T-cell (primary cell): ENCODE measurements at regions of chr18 and their contacts with region 1.

Region 1: DNA sequence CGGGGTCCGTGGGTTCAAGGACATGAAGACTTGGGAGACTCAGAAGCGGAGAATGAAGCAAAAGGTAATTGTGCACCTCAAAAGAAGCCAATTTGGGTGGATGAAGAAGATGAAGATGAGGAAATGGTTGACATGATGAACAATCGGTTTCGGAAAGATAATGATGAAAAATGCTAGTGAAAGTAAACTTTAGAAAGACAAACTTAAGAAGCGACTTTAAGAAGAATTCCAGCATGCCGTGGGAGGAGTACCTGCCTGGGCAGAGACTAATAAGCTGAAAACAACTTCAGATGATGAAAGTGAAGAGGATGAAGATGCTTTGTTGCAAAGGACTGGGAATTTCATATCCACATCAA is 43.5 kb downstream of the PSTPIP2 start:
- DNase-seq: no peak
- ATAC-seq: no peak
- H3K4me3 ChIP-seq: peak overlapping the region; percentile 60 to 70
- H3K4me3 Mint-ChIP-seq: peak overlapping the region; percentile 86 to 91 (median 90)
- H3K27ac ChIP-seq: no peak overlapping the region
- H3K27ac Mint-ChIP-seq: peak overlapping the region; percentile 12 to 84
- H3K4me1 ChIP-seq: peaks cover 2 to 10% of the 10 kb centered on the region in 2 experiments
- H3K4me1 Mint-ChIP-seq: peaks cover 12 to 13% (median 12%) of the 10 kb centered on the region in 3 donors
- H3K27me3 ChIP-seq: no peaks in the 10 kb centered on the region
- H3K27me3 Mint-ChIP-seq: peaks cover 0 to 5% of the 10 kb centered on the region in 2 donors

Region 2: DNA sequence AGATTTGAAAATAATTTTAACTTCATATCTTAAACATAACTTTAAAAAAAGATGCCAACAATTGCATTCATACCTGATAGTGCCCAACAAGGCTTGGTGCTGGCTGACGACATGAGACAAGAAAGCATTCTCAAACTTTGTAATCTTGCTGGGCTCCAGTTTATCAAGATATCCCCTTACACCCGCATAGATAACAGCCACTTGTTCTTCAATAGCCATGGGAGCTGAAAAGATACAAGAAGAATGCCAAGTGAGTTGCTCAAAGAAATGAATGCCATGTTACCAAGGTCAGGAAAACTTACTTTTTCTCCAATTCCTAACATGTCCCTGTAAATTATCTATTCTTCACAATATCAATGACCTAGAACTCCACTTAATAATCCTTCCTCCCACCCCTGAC is 55.9 kb after region 1 on chr18:
- CTCF ChIA-PET with region 1: no interaction called
- POLR2A ChIA-PET with region 1: interaction called in 1 of 2 experiments, 12 read pairs
- DNase-seq: no peak
- ATAC-seq: no peak
- H3K4me3 ChIP-seq: no peak overlapping the region
- H3K4me3 Mint-ChIP-seq: no peak overlapping the region
- H3K27ac ChIP-seq: no peak overlapping the region
- H3K27ac Mint-ChIP-seq: no peak overlapping the region
- H3K4me1 ChIP-seq: no peaks in the 10 kb centered on the region
- H3K4me1 Mint-ChIP-seq: peaks cover 0 to 3% (median 2%) of the 10 kb centered on the region in 3 donors
- H3K27me3 ChIP-seq: no peaks in the 10 kb centered on the region
- H3K27me3 Mint-ChIP-seq: no peaks in the 10 kb centered on the region